ENCODE measurements at regions of chr16 and their contacts with region 1.

Region 1: GRCh38 chr16:67833418-67834241 is 8.5 kb upstream of the THAP11 start:
- DNase-seq: peak; percentile 95 to 96
- ATAC-seq: peak; percentile 94 to 99 (median 98)
- H3K4me3 ChIP-seq: peak overlapping the region; percentile 52 to 84 (median 79)
- H3K27ac ChIP-seq: peak overlapping the region in 9 of 10 donors; percentile 36 to 88 (median 70)
- H3K4me1 ChIP-seq: peaks cover 3 to 26% (median 14%) of the 10 kb centered on the region in 9 donors
- H3K27me3 ChIP-seq: no peaks in the 10 kb centered on the region
- CTCF ChIP-seq: no peak

Region 2: DNA sequence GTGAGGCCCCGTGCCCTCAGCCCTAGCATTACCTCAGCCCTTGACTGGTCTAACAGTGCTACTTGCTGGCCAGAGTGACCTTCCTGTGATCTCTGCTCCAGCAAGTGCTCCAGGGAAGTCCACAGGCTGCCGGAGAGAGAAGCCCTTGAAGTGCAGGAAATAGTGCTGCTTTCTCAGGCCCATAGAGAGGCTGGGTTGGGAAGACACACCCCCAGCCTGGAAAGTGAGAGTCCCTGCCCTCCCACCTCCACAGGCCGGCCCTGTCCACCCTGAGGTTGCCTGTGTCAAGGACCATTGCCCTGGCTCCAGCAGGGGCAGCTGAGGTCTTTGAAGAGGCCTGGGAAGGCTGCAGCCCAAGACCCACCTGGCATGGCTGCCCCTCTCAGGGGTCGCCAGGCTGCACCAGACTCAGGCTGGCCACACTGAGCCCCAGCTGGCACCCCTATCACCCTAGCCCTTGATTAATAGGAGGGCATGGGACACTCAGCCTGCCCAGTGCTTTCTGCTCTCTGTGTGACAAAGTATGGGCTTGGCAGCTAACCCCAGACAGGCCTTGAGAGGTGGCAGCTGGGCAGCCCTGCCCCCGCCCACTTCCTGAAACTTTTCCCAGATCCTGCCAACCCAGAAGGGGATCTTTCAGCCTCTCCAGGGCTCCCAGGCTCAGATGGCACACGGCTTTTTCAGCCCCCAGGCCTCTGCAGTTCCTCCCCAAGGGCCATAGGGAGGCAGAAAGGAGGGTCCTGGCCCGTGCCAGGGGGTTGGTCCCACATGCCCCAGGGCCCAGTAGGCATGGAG is 374.4 kb before region 1 on chr16:
- intact Hi-C with region 1: no loop called
- DNase-seq: peak; percentile 59 to 64
- ATAC-seq: peak; percentile 47 to 75 (median 61)
- H3K4me3 ChIP-seq: no peak overlapping the region
- H3K27ac ChIP-seq: peak overlapping the region; percentile 44 to 87 (median 74)
- H3K4me1 ChIP-seq: peaks cover 45 to 87% (median 79%) of the 10 kb centered on the region in 9 donors
- H3K27me3 ChIP-seq: no peaks in the 10 kb centered on the region
- CTCF ChIP-seq: no peak

Region 3: DNA sequence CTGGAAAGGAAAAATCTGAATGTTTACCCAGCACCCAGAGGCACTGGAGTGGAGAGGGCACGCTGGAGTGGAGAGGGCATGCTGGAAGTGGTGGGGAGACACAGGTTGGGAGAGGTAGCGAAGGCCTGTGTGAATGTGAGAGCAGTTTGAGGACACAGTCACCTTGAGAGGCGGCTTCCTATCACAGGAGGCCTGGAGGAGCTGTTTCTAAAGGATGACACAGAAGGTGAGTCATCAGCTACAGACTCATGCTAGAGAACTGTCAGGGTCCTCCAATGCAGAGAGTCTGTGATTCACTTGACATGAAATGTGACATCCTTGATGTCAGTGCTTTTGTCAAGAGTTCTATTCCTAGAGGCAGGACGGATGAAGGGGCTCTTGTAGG is 84.2 kb after region 1 on chr16:
- intact Hi-C with region 1: loop called in 2 of 10 experiments (anchors 5 kb)
- DNase-seq: no peak
- ATAC-seq: peak in 5 of 8 donors; percentile 8 to 73 (median 36)
- H3K4me3 ChIP-seq: no peak overlapping the region
- H3K27ac ChIP-seq: peak overlapping the region in 9 of 10 donors; percentile 17 to 83 (median 53)
- H3K4me1 ChIP-seq: peaks cover 25 to 82% (median 61%) of the 10 kb centered on the region in 9 donors
- H3K27me3 ChIP-seq: no peaks in the 10 kb centered on the region
- CTCF ChIP-seq: no peak

Region 4: GRCh38 chr16:67928561-67929364 is 95.1 kb after region 1 on chr16:
- intact Hi-C with region 1: loop called in 3 of 10 experiments (anchors 5 kb)
- DNase-seq: peak; percentile 67 to 78
- ATAC-seq: peak; percentile 51 to 77 (median 67)
- H3K4me3 ChIP-seq: no peak overlapping the region
- H3K27ac ChIP-seq: peak overlapping the region in 1 of 10 donors; percentile 4
- H3K4me1 ChIP-seq: peaks cover 0 to 39% (median 20%) of the 10 kb centered on the region in 9 donors
- H3K27me3 ChIP-seq: no peaks in the 10 kb centered on the region
- CTCF ChIP-seq: peak; percentile 69 to 91 (median 85)

Measured in heart right ventricle (tissue), 16 donors.